Endothelial cell of umbilical vein (primary cell): ENCODE measurements at regions of chr2 and their contacts with region 1.

Region 1: DNA sequence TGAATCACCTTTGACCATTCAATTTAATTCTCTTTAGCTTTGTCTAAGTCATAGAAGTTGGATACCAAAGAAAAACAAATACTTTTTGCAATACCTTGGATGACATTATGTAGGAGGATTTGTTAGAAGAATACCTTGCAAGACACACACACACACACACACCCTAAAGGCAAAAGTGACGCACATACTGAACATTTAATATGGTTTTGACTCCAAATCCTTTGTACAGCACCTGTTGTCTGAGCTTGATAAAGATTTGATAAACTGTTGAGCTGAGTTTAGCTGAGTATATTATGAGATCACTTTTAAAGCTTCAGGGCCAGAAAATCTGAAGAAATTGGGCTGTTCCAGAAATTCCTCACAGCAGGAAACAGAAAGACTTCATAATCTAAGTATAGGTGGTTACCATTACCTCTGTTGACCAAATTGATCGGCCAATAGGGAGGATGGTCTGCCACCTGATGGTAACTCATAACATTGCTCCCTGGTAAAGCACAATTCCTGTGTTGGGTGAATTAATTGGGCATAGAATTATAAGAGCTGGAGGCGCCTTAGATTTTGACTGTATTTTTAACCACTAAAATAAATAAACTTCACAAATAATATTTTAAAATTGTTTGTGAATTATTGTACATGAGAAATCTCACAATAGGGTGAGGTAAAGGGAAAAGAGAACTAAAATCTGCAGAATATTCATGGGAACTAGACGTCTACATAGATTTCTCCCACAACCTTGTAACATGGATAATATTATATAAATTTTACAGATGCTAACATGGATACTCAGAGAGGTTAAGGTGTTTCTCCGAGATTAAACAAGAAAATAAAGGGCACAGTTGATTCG is 21.9 kb upstream of the RPIA start:
- DNase-seq: peak; percentile 55
- H3K4me3 ChIP-seq: no peak overlapping the region
- H3K27ac ChIP-seq: no peak overlapping the region
- H3K4me1 ChIP-seq: no peaks in the 10 kb centered on the region
- H3K27me3 ChIP-seq: peaks cover 5 to 9% of the 10 kb centered on the region in 2 experiments
- CTCF ChIP-seq: peak; percentile 40 to 47
- POLR2A ChIP-seq: no peak

Region 2: DNA sequence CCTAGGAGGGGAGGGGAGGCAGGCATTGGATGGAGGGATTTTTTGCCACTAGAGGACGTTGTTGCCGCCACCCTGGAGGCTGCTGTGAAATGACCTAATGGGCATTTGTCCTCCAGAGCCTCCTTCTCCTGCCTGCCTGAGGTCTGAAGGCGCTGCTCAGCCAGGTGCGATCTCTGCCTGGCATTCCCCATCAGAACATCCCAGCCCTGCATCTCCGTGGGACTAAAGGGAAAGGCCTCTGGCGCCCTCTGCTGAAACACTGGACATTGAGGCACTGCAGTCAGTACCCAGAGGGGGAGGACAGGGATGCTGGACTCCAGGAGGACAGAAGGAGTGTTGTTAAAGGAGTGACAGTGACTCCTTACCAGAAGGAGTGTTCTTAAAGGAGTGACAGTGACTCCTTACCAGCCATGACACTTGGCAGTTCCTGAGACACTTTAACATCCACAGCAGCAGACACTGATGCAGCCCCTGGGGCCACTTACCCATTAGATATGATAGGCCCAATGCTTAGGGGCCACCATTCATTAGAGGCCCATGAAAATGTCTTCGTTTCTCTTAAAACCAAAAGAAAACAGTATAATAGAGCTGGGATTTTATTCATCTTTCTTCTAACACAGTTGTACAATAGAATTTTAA is 482.4 kb before region 1 on chr2:
- CTCF ChIA-PET with region 1: interaction called, 15 read pairs
- POLR2A ChIA-PET with region 1: no interaction called
- dilution Hi-C with region 1: no loop called
- intact Hi-C with region 1: loop called (anchors 1 kb)
- DNase-seq: peak; percentile 33
- H3K4me3 ChIP-seq: no peak overlapping the region
- H3K27ac ChIP-seq: no peak overlapping the region
- H3K4me1 ChIP-seq: no peaks in the 10 kb centered on the region
- H3K27me3 ChIP-seq: no peaks in the 10 kb centered on the region
- CTCF ChIP-seq: peak; percentile 40 to 68
- POLR2A ChIP-seq: no peak

Region 3: DNA sequence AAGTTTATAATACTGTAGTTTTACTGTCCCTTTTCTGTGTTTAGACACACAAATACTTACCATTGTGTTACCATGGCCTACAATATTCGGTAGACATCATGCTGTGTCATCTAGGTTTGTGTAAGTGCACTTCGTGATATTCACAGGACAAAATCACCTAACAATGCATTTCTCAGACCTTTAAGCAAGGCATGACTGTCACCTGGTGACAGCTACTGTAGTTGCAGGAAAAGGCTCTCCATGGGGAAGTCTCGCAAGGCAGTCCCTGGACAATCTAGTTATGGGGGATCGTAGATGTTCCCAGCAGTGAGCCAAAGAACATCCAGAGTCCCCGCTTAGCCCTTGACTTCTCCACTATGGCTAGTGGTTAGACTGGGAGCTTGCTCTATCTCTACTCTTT is 115.4 kb before region 1 on chr2:
- CTCF ChIA-PET with region 1: interaction called, 13 read pairs
- POLR2A ChIA-PET with region 1: no interaction called
- dilution Hi-C with region 1: loop called (anchors 25 kb)
- intact Hi-C with region 1: no loop called
- DNase-seq: no peak
- H3K4me3 ChIP-seq: no peak overlapping the region
- H3K27ac ChIP-seq: no peak overlapping the region
- H3K4me1 ChIP-seq: no peaks in the 10 kb centered on the region
- H3K27me3 ChIP-seq: peaks cover 8 to 11% of the 10 kb centered on the region in 2 experiments
- CTCF ChIP-seq: no peak
- POLR2A ChIP-seq: no peak

Region 4: DNA sequence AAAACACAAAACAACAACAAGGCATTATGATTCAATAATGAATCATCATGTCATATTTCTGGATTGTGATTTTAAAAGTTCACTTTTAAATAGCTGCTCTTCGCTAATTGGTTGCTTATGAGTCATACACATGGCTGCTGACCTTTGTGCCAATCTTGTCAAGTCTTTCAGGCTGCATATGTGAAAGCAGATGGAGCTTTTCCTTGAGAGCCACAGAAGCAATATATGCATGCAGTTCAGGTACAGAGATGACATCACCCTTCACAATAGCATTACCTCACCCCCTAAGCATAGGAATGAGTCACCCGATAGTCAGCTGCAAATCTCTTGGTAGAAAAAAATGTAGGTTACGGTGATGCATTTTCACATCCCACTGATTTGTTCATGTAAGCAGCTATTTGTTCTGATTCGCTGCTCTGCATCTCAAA is 69.5 kb before region 1 on chr2:
- CTCF ChIA-PET with region 1: interaction called, 378 read pairs
- POLR2A ChIA-PET with region 1: no interaction called
- dilution Hi-C with region 1: no loop called
- intact Hi-C with region 1: no loop called
- DNase-seq: peak; percentile 99
- H3K4me3 ChIP-seq: no peak overlapping the region
- H3K27ac ChIP-seq: peak overlapping the region; percentile 84
- H3K4me1 ChIP-seq: peaks cover 35% of the 10 kb centered on the region
- H3K27me3 ChIP-seq: no peaks in the 10 kb centered on the region
- CTCF ChIP-seq: no peak
- POLR2A ChIP-seq: no peak

Region 5: GRCh38 chr2:88627056-88627855 is 42.3 kb before region 1 on chr2 and contains the start of gene EIF2AK3:
- CTCF ChIA-PET with region 1: interaction called, 10 read pairs
- POLR2A ChIA-PET with region 1: interaction called, 5 read pairs
- dilution Hi-C with region 1: no loop called
- intact Hi-C with region 1: loop called (anchors 2 kb)
- DNase-seq: peak; percentile 100
- H3K4me3 ChIP-seq: peak within 1 kb of the TSS; percentile 54 to 82 (median 79)
- H3K27ac ChIP-seq: peak within 1 kb of the TSS; percentile 95
- H3K4me1 ChIP-seq: peaks cover 24% of the 10 kb centered on the region
- H3K27me3 ChIP-seq: peaks cover 2 to 5% of the 10 kb centered on the region in 2 experiments
- CTCF ChIP-seq: no peak
- POLR2A ChIP-seq: no peak
- total RNA-seq, gene EIF2AK3: 17.3 and 17.5 TPM in 2 replicates

Region 6: GRCh38 chr2:88691339-88692183 is 22.0 kb after region 1 on chr2 and contains the start of gene RPIA:
- CTCF ChIA-PET with region 1: interaction called, 10 read pairs
- POLR2A ChIA-PET with region 1: no interaction called
- dilution Hi-C with region 1: no loop called
- intact Hi-C with region 1: no loop called
- DNase-seq: peak; percentile 99
- H3K4me3 ChIP-seq: peak within 1 kb of the TSS; percentile 44 to 83 (median 73)
- H3K27ac ChIP-seq: peak within 1 kb of the TSS; percentile 59
- H3K4me1 ChIP-seq: peaks cover 13% of the 10 kb centered on the region
- H3K27me3 ChIP-seq: no peaks in the 10 kb centered on the region
- CTCF ChIP-seq: peak; percentile 71 to 76
- POLR2A ChIP-seq: peak; percentile 61
- total RNA-seq, gene RPIA: 29.8 and 30.3 TPM in 2 replicates

Region 7: GRCh38 chr2:88810017-88810416 is 140.4 kb after region 1 on chr2:
- CTCF ChIA-PET with region 1: no interaction called
- POLR2A ChIA-PET with region 1: no interaction called
- dilution Hi-C with region 1: no loop called
- intact Hi-C with region 1: no loop called
- DNase-seq: no peak
- H3K4me3 ChIP-seq: no peak overlapping the region
- H3K27ac ChIP-seq: no peak overlapping the region
- H3K4me1 ChIP-seq: peaks cover 3% of the 10 kb centered on the region
- H3K27me3 ChIP-seq: peaks cover 0 to 9% of the 10 kb centered on the region in 2 experiments
- CTCF ChIP-seq: no peak
- POLR2A ChIP-seq: no peak